ENCODE measurements at regions of chr19 and their contacts with region 1.

Region 1: GRCh38 chr19:30682999-30683536 is 310.9 kb downstream of the ZNF536 start:
- DNase-seq: peak; percentile 66
- H3K4me3 Mint-ChIP-seq: no peak overlapping the region
- H3K27ac Mint-ChIP-seq: no peak overlapping the region
- H3K4me1 Mint-ChIP-seq: no peaks in the 10 kb centered on the region
- H3K27me3 Mint-ChIP-seq: peaks cover 30% of the 10 kb centered on the region

Region 2: DNA sequence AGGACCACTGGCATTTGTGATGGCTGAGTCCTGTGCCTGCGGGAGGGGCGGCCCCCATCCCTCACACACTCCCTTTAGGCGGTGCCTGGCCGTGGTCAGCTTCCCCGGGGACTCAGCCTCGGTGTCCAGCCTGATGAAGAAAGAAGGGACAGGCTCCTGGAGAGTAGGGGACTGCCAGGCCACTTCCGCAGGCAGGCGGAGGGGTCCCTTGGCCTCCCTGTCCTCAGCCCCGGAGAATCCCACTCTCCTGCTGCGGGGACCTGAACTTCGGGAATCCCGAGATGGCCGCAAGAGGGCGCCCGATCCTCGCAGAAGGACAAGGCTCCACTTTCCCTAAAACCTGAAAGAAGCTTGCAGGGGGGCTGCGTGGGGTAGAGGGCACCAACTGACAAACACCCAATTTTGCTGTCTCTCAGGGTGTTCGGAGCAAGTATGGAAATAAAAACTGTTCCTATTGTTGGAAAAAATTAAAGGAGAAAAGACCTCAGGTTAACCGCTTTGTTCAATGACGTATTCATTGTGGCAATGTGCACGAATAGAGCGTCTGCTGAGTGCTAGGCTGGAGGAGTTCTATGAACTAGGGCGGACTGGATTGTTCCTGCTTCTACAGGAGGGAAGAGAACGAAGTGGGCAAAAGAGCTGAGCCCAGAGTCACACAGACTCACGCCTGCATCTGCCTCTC is 13.6 kb before region 1 on chr19:
- CTCF ChIA-PET with region 1: interaction called, 24 read pairs
- POLR2A ChIA-PET with region 1: no interaction called
- intact Hi-C with region 1: no loop called
- DNase-seq: peak; percentile 57
- H3K4me3 Mint-ChIP-seq: no peak overlapping the region
- H3K27ac Mint-ChIP-seq: no peak overlapping the region
- H3K4me1 Mint-ChIP-seq: no peaks in the 10 kb centered on the region
- H3K27me3 Mint-ChIP-seq: peaks cover 24% of the 10 kb centered on the region

Region 3: DNA sequence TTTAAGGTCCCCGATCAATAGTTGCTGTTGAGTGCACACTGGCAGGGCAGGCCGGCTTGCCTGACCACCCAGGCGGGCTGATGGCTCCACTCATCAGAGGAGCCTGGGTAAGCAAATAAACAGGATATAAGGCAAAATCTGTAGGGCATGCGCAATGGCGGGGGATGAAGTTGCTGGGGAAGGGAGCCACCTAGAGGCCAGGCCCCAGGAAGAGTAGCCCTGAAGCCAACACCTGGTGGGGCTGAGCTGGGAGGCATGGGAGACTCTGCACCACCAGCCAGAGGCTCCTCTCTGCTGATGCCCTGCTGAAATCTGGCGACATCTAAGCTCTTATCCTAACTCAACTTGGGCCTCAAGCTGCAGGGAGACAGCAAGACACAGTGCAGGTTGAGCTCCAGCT is 13.4 kb after region 1 on chr19:
- CTCF ChIA-PET with region 1: interaction called, 10 read pairs
- POLR2A ChIA-PET with region 1: no interaction called
- intact Hi-C with region 1: no loop called
- DNase-seq: peak; percentile 26
- H3K4me3 Mint-ChIP-seq: no peak overlapping the region
- H3K27ac Mint-ChIP-seq: no peak overlapping the region
- H3K4me1 Mint-ChIP-seq: peaks cover 9% of the 10 kb centered on the region
- H3K27me3 Mint-ChIP-seq: peaks cover 25% of the 10 kb centered on the region

Region 4: DNA sequence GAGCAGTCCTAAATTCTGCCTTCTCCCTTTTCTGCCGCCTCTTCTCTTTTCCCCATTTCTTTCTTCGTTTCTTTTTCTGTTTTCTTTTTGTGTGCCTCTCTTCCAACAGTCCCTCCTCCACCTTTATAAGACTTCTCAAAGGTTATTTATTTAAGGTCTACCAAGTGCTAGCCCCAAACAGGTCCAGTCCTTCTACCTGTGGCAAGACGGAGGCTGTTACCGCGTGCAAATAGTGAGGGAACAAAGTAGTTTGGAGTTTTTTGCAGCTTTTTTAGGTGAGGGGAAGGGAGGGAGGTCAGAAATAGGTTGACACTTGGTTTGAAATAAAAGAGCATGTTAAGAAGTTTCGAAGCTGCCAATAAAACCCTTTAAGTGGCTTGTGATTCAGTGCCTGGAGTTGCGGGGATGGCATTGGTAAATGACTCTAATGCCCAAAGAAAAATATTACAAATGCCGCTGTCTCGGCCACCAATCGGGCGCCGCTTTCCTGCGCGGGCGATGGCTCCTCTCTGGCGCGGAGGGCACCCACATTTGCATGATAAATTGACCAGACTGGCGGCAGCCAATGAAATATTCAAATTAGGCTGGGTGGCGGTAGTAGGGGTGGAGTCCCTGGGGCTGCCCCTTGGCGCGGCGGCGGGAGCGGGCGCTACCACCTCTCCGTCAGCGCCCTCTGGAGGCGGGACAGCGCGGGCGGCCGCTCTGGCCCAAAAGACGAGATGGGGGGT is 673.7 kb after region 1 on chr19:
- CTCF ChIA-PET with region 1: interaction called, 10 read pairs
- POLR2A ChIA-PET with region 1: no interaction called
- intact Hi-C with region 1: loop called (anchors 5 kb)
- DNase-seq: peak; percentile 80
- H3K4me3 Mint-ChIP-seq: no peak overlapping the region
- H3K27ac Mint-ChIP-seq: no peak overlapping the region
- H3K4me1 Mint-ChIP-seq: peaks cover 47% of the 10 kb centered on the region
- H3K27me3 Mint-ChIP-seq: peaks cover 71% of the 10 kb centered on the region

Region 5: GRCh38 chr19:32041681-32042292 is 1358.7 kb after region 1 on chr19:
- CTCF ChIA-PET with region 1: no interaction called
- POLR2A ChIA-PET with region 1: no interaction called
- intact Hi-C with region 1: loop called (anchors 5 kb)
- DNase-seq: peak; percentile 44
- H3K4me3 Mint-ChIP-seq: no peak overlapping the region
- H3K27ac Mint-ChIP-seq: no peak overlapping the region
- H3K4me1 Mint-ChIP-seq: no peaks in the 10 kb centered on the region
- H3K27me3 Mint-ChIP-seq: peaks cover 21% of the 10 kb centered on the region

Measured in activated CD4-positive, alpha-beta memory T cell treated with anti-CD3 and anti-CD28 coated beads for 36 hours (primary cell).